ENCODE measurements at regions of chr19 and their contacts with region 1.

Region 1: GRCh38 chr19:45927565-45928261 is 13.1 kb upstream of the NANOS2 start:
- DNase-seq: peak; percentile 91
- H3K4me3 ChIP-seq: no peak overlapping the region
- H3K27ac ChIP-seq: no peak overlapping the region
- H3K4me1 ChIP-seq: peaks cover 6% of the 10 kb centered on the region
- H3K27me3 ChIP-seq: no peaks in the 10 kb centered on the region
- CTCF ChIP-seq: no peak
- POLR2A ChIP-seq: peak; percentile 47

Region 2: DNA sequence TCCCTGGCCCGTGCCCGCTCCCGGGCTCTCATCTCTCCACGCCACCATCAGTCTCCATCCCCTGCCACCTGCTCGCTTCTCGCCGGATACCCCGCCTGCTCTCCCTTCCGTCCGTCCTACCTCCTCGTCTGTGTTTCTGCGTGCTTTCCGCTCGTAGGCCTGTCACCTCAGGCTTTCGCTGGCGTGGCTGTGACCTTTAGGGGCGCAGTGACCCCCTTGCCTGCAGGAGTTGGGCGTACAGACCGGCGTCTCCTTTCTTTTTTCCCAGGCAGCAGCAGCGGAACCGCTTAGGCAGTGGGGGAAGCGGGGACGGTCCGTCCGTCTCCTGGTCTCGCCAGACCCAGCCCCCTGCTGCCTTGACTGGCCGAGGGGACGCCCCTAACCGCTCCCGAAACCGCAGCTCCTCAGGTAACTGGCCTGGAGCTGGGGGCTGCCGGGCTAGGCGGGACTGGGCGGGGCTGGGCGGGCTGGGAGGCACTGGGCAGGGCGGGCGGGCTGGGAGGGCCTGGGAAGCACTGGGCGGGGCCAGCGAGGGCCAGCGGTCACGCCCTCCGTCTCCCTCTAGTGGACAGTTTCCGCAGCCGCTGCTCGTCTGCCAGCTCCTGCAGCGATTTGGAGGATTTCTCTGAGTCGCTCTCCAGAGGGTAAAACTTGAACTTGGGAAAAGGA is 88.8 kb after region 1 on chr19:
- CTCF ChIA-PET with region 1: interaction called, 5 read pairs
- POLR2A ChIA-PET with region 1: no interaction called
- dilution Hi-C with region 1: no loop called
- intact Hi-C with region 1: loop called (anchors 5 kb)
- DNase-seq: peak; percentile 76
- H3K4me3 ChIP-seq: peak overlapping the region; percentile 47 to 69 (median 59)
- H3K27ac ChIP-seq: no peak overlapping the region
- H3K4me1 ChIP-seq: peaks cover 11% of the 10 kb centered on the region
- H3K27me3 ChIP-seq: peaks cover 4 to 8% of the 10 kb centered on the region in 2 experiments
- CTCF ChIP-seq: peak; percentile 56 to 86
- POLR2A ChIP-seq: no peak

Region 3: DNA sequence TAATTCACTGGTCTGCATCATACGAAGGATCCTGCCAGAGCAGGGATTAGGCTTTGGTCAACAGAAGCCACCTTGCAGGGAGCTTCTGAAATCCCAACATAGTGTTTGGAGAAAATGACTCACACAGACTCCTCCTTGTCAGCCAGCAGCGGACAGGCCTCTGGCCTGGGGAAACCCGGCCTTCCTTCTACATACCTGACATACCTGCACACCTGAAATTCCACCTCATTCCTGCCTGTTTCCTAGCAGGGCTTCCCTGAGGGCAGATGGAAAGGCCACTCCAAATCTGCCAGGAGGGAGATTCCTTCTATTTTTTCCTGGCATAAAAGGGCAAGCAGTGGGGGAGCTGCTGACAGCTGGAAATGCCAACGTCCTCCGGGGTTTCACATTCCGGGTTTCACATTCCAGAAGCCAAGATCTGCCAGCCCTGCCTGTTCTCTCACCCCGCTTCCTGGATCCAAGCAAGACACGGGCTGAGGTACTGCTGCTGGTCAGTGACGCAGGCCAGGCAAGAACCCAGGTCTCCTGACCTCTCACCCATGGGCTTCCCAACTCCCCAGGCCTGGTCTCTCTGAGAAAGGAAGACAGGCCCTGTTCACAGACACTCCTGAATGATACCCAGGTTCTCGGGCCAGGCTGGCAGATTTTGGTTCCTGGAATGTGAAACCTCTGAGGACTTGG is 283.6 kb after region 1 on chr19:
- CTCF ChIA-PET with region 1: no interaction called
- POLR2A ChIA-PET with region 1: no interaction called
- dilution Hi-C with region 1: no loop called
- intact Hi-C with region 1: loop called (anchors 5 kb)
- DNase-seq: peak; percentile 54
- H3K4me3 ChIP-seq: no peak overlapping the region
- H3K27ac ChIP-seq: no peak overlapping the region
- H3K4me1 ChIP-seq: no peaks in the 10 kb centered on the region
- H3K27me3 ChIP-seq: peaks cover 2 to 11% of the 10 kb centered on the region in 2 experiments
- CTCF ChIP-seq: no peak
- POLR2A ChIP-seq: no peak